MCF 10A (cell line): ENCODE measurements at regions of chr4 and their contacts with region 1.

Region 1: DNA sequence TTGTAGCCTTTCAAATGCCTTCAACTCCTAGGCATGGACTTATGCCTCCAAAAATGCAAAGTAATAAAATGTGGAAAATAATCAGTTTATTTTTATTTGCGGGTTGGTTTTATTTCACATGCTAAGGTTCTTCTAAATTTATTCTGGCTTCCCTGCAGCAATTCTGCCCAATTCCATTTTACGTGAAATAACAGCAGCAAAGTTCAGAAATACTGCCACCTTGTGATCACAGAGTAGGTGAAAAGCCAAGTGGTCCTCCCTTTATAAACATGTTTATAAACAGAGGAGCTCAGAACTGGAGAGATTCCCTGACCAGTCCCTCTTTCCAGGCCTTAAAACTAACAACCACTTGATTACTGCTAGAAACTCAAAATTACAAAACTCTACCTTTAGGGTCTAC is 14.7 kb upstream of the DCHS2 start:
- DNase-seq: peak; percentile 56
- H3K4me3 Mint-ChIP-seq: no peak overlapping the region
- H3K27ac Mint-ChIP-seq: no peak overlapping the region
- H3K4me1 Mint-ChIP-seq: no peaks in the 10 kb centered on the region
- H3K27me3 Mint-ChIP-seq: no peaks in the 10 kb centered on the region
- CTCF ChIP-seq: peak; percentile 43

Region 2: GRCh38 chr4:153785910-153786721 is 720.1 kb before region 1 on chr4:
- CTCF ChIA-PET with region 1: interaction called, 39 read pairs
- POLR2A ChIA-PET with region 1: no interaction called
- intact Hi-C with region 1: loop called (anchors 1 kb)
- DNase-seq: peak; percentile 49
- H3K4me3 Mint-ChIP-seq: no peak overlapping the region
- H3K27ac Mint-ChIP-seq: no peak overlapping the region
- H3K4me1 Mint-ChIP-seq: peaks cover 13% of the 10 kb centered on the region
- H3K27me3 Mint-ChIP-seq: no peaks in the 10 kb centered on the region
- CTCF ChIP-seq: peak; percentile 47

Region 3: DNA sequence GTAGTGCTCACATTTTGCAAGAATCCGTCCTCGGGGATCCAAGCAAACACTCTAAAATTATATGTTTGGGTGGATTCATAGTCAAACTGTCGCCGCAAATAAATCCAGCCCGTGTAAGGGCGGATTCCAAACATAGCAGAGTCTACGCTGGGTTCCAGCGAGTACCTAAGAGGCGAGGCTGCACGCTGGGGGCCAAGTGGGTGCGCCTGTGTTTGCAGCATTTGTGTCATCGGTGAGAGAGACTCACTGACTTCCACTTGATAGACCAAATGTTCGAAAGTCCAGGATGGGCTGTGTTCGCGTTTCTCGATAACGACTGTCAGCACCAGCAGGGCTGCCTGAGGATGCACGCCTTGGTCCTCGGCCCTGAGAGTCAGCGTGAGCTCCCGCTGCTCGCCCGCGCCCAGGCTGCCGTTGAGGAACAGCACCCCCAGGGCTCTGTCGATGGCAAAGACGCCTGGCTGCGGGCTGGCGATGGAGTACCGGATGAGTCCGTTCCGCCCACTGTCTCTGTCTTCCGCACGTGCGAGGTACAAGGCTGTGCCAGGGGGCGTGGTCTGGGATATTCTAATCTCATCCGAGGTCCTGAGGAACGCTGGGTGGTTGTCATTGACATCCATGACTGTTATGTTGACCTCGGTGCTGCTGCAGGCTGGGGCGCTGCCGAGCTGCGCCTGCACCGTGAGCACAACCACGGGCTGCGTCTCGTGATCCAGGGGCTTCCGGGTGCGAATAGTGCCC is 173.4 kb before region 1 on chr4:
- CTCF ChIA-PET with region 1: interaction called, 43 read pairs
- POLR2A ChIA-PET with region 1: no interaction called
- intact Hi-C with region 1: loop called (anchors 2 kb)
- DNase-seq: no peak
- H3K4me3 Mint-ChIP-seq: no peak overlapping the region
- H3K27ac Mint-ChIP-seq: no peak overlapping the region
- H3K4me1 Mint-ChIP-seq: no peaks in the 10 kb centered on the region
- H3K27me3 Mint-ChIP-seq: no peaks in the 10 kb centered on the region
- CTCF ChIP-seq: no peak

Region 4: DNA sequence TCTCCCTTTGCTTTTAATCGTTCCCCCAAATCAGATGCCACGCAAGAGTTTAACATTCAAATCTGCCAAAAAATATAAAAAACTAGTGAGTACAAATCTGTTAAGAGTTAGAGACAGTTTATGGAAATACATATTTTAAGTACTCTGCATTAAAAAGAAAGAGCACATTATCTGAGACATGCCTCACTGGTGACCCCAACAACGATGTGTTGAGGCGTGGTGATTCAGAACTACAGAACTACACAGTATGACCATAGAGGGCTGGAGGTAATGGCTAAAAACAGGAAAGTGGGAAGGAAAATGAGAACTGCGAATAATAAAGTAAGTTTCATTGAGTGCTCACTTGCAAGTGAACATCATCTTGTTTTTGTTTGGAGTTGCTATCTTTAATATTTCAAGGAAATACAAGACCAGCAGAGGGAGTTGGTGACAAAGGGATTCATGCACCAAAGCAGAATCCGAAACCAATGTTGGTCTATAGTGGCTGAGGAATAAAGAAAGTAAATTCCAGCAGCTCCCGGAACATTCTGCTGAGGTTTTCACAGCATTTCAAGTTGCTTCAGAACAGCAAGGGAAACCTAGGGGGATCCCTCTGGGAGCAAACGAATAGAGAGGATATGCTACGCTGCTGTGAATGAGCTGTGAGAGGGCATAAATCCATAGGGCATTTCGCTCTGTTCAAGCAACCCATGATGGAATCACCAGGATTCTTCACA is 106.8 kb before region 1 on chr4:
- CTCF ChIA-PET with region 1: interaction called, 15 read pairs
- POLR2A ChIA-PET with region 1: no interaction called
- intact Hi-C with region 1: loop called (anchors 1 kb)
- DNase-seq: peak; percentile 54
- H3K4me3 Mint-ChIP-seq: no peak overlapping the region
- H3K27ac Mint-ChIP-seq: no peak overlapping the region
- H3K4me1 Mint-ChIP-seq: peaks cover 9% of the 10 kb centered on the region
- H3K27me3 Mint-ChIP-seq: no peaks in the 10 kb centered on the region
- CTCF ChIP-seq: peak; percentile 46

Region 5: DNA sequence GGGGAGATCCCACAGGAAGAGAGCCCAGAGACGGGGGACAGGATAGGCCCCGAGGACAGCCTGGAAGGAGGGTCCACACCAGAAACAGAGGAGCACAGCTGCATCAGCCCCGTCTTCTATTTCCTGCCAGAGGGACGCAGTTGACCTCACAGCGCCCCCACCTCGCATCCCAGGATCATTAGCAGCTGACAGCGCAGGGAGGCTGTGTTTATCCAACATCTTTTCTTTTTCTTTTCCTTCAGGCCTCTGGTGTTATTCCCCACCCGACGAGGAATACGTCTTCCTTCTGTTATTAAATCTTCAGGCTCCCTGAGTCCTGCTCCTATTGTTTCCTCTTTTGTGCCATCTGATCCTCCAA is 90.1 kb before region 1 on chr4:
- CTCF ChIA-PET with region 1: interaction called, 15 read pairs
- POLR2A ChIA-PET with region 1: no interaction called
- intact Hi-C with region 1: loop called (anchors 5 kb)
- DNase-seq: peak; percentile 36
- H3K4me3 Mint-ChIP-seq: peak overlapping the region; percentile 79
- H3K27ac Mint-ChIP-seq: peak overlapping the region; percentile 33
- H3K4me1 Mint-ChIP-seq: peaks cover 13% of the 10 kb centered on the region
- H3K27me3 Mint-ChIP-seq: no peaks in the 10 kb centered on the region
- CTCF ChIP-seq: no peak

Region 6: DNA sequence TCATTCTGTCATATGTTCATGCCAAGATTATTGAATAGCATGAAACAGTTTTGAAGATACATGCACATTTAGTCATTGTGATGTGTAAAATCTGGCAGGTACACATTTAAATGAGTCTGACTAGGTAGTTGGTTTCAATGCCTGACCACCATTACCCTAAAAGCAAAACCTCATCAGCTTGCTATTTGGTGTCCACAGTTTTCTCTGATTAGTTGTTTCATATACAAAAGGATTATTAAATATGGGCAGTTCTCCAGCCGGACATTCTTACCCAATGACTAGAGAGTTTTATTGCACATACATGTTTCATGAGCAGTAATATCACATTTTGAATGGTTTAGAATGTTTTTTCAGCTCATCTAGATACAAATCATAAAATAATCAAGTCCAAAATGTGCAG is 38.4 kb before region 1 on chr4:
- CTCF ChIA-PET with region 1: interaction called, 13 read pairs
- POLR2A ChIA-PET with region 1: no interaction called
- intact Hi-C with region 1: no loop called
- DNase-seq: peak; percentile 73
- H3K4me3 Mint-ChIP-seq: no peak overlapping the region
- H3K27ac Mint-ChIP-seq: no peak overlapping the region
- H3K4me1 Mint-ChIP-seq: peaks cover 23% of the 10 kb centered on the region
- H3K27me3 Mint-ChIP-seq: no peaks in the 10 kb centered on the region
- CTCF ChIP-seq: no peak

Region 7: DNA sequence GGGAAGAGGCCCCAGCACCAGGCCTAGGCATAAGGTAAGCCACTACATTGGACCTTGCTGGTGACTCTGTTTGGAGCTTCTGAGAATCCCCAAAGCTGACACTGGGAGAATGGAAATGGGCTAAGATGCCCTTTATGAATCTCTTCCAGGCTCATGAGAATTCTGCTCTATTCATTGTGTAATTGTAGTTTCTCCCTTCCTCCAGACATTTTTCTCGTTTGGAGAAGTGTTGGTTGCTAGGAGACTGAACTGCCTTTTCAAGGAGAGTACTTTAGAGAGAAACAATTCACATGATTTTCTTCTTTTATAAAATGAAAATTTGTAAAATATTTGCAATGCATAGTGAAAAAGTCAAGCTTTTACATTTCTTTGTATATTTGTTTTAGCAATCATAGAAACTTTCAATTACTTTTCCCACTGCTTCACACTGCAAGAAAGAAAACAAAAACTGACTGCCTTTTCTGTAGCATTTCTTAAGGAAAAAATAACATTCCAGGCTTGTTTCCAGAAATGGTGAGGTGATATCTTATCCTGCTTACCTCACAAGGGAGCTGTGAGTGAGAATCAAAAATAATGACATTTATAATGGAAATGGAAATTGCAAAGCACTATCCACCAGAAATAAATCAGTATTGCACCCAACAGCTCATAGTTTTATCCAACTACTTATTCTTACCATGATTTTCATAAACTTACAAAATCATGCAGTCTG is 10.2 kb after region 1 on chr4:
- CTCF ChIA-PET with region 1: interaction called, 40 read pairs
- POLR2A ChIA-PET with region 1: no interaction called
- intact Hi-C with region 1: no loop called
- DNase-seq: no peak
- H3K4me3 Mint-ChIP-seq: no peak overlapping the region
- H3K27ac Mint-ChIP-seq: no peak overlapping the region
- H3K4me1 Mint-ChIP-seq: no peaks in the 10 kb centered on the region
- H3K27me3 Mint-ChIP-seq: peaks cover 23% of the 10 kb centered on the region
- CTCF ChIP-seq: no peak